Mucosa of descending colon (tissue), 3 donors: ENCODE measurements at regions of chr9 and their contacts with region 1.

Region 1: GRCh38 chr9:102867488-102867887 is 127.6 kb upstream of the CYLC2 start:
- DNase-seq: no peak
- ATAC-seq: no peak
- H3K4me3 ChIP-seq: no peak overlapping the region
- H3K4me1 ChIP-seq: no peaks in the 10 kb centered on the region
- CTCF ChIP-seq: no peak

Region 2: GRCh38 chr9:102796244-102796643 is 71.2 kb before region 1 on chr9:
- intact Hi-C with region 1: loop called in 1 of 2 experiments (anchors 10 kb)
- DNase-seq: no peak
- ATAC-seq: no peak
- H3K4me3 ChIP-seq: no peak overlapping the region
- H3K4me1 ChIP-seq: no peaks in the 10 kb centered on the region
- CTCF ChIP-seq: no peak

Region 3: DNA sequence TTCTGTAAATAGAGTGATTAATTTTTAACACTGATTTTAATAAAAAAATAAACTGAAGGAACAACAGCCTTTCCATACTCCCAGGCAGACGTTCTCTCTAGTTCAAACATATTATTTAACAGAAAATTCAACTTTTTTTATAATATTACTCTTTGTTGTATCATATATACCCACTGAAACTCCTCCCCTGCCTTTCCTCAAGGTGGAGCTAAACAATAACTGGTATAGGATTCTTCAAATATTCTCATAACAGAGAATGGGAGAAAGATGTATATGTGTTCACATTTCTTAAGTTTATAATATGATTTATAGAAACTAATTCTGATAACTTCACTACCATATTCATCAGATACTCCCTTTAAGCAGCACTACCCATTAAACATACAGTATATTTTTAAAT is 211.1 kb after region 1 on chr9:
- intact Hi-C with region 1: no loop called
- DNase-seq: no peak
- ATAC-seq: no peak
- H3K4me3 ChIP-seq: no peak overlapping the region
- H3K4me1 ChIP-seq: no peaks in the 10 kb centered on the region
- CTCF ChIP-seq: no peak